ENCODE measurements at regions of chr19 and their contacts with region 1.

Region 1: DNA sequence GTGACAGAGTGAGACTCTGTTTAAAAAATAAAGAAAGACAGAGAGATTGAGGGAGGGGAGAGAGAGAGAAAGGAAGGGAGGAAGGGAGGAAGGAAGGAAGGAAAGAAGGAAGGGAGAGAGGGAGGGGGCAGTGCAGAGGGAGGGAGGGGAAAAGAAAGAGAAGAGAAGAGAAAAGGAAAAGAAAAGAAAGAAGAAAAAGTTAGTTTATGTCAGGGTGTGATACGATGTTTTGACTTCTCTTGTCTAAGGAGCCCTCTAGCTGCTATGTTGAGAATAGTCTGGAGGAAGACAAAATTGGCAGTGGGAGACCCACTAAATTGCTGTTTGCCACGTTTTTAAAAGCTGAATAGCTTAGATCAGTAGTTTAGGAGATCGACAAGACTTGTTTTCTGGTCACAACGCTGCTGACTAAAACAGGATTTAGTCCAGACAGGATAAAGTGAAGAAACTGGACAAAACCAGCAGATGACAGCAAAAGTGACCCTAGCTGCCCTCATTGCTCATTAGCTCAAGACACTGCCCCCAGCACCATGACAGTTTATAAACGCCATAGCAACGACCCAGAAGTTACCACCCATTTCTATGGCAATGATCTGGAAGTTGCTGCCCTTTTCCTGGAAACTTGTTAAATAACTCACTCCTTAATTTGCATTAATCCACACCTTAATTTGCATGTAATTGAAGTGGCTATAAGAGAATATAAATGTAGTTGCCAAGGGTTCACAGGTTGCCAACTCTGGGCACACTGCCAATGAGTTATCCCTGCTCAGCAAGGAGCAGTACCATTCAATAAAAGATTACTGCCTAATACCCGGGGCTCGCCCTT is 11.1 kb downstream of the TEX101 start:
- H3K4me3 ChIP-seq: no peak overlapping the region
- H3K27ac ChIP-seq: no peak overlapping the region
- H3K4me1 ChIP-seq: peaks cover 12% of the 10 kb centered on the region
- CTCF ChIP-seq: peak; percentile 91

Region 2: GRCh38 chr19:43332058-43332922 is 93.5 kb before region 1 on chr19:
- CTCF ChIA-PET with region 1: interaction called, 10 read pairs
- POLR2A ChIA-PET with region 1: no interaction called
- H3K4me3 ChIP-seq: no peak overlapping the region
- H3K27ac ChIP-seq: no peak overlapping the region
- H3K4me1 ChIP-seq: no peaks in the 10 kb centered on the region
- CTCF ChIP-seq: no peak

Region 3: GRCh38 chr19:43395561-43395960 is 30.2 kb before region 1 on chr19:
- CTCF ChIA-PET with region 1: interaction called, 29 read pairs
- POLR2A ChIA-PET with region 1: no interaction called
- H3K4me3 ChIP-seq: no peak overlapping the region
- H3K27ac ChIP-seq: no peak overlapping the region
- H3K4me1 ChIP-seq: peaks cover 23% of the 10 kb centered on the region
- CTCF ChIP-seq: no peak

Region 4: GRCh38 chr19:43438291-43439096 is 12.7 kb after region 1 on chr19:
- CTCF ChIA-PET with region 1: interaction called, 217 read pairs
- POLR2A ChIA-PET with region 1: interaction called, 4 read pairs
- H3K4me3 ChIP-seq: no peak overlapping the region
- H3K27ac ChIP-seq: no peak overlapping the region
- H3K4me1 ChIP-seq: peaks cover 10% of the 10 kb centered on the region
- CTCF ChIP-seq: no peak

Region 5: GRCh38 chr19:43474986-43475705 is 49.4 kb after region 1 on chr19:
- CTCF ChIA-PET with region 1: no interaction called
- POLR2A ChIA-PET with region 1: no interaction called
- H3K4me3 ChIP-seq: peak overlapping the region; percentile 3
- H3K27ac ChIP-seq: 0 out of 2 replicates have a peak overlapping the region, but pooled peaks have one; percentile 45
- H3K4me1 ChIP-seq: peaks cover 7% of the 10 kb centered on the region
- CTCF ChIP-seq: no peak